ENCODE measurements at regions of chr14 and their contacts with region 1.

Region 1: DNA sequence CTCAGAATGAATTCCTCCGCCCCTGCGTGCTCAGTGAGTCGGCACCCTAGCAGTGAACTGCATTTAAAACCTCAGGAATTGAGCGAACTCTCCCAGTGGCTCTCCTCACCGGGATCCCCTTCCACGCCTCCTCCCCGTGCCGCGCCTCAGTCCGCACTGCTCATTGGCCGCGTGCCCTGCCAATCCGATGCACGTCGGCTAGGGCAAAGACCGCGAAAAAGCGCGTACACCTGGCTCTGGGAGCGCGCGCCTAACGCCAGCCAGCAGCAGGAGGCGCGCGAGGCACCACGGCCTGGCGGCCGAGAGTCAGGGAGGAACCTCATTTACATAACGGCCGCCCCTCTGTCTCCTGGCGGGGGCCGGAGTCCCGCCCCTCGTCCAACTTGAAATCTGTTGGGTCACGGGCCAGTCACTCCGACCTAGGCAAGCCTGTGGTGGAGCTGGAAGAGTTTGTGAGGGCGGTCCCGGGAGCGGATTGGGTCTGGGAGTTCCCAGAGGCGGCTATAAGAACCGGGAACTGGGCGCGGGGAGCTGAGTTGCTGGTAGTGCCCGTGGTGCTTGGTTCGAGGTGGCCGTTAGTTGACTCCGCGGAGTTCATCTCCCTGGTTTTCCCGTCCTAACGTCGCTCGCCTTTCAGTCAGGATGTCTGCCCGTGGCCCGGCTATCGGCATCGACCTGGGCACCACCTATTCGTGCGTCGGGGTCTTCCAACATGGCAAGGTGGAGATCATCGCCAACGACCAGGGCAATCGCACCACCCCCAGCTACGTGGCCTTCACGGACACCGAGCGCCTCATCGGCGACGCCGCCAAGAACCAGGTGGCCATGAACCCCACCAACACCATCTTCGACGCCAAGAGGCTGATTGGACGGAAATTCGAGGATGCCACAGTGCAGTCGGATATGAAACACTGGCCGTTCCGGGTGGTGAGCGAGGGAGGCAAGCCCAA is at the start of gene HSPA2:
- DNase-seq: peak; percentile 88
- ATAC-seq: peak; percentile 99
- H3K4me3 ChIP-seq: peak within 1 kb of the TSS; percentile 70 to 73 (median 72)
- H3K27ac ChIP-seq: peak within 1 kb of the TSS; percentile 59
- H3K4me1 ChIP-seq: peaks cover 18% of the 10 kb centered on the region
- H3K27me3 ChIP-seq: no peaks in the 10 kb centered on the region
- CTCF ChIP-seq: peak; percentile 96
- EP300 ChIP-seq: no peak
- POLR2A ChIP-seq: peak; percentile 47 to 53; a peak in 3 of 4 replicates
- RAD21 ChIP-seq: peak; percentile 79
- total RNA-seq, gene HSPA2: 0.27 and 0.28 TPM in 2 replicates

Region 2: GRCh38 chr14:64636208-64636979 is 95.9 kb after region 1 on chr14:
- CTCF ChIA-PET with region 1: interaction called, 5 read pairs
- POLR2A ChIA-PET with region 1: no interaction called
- in situ Hi-C with region 1: loop called (anchors 5 kb)
- intact Hi-C with region 1: loop called (anchors 1 kb)
- DNase-seq: peak; percentile 27
- ATAC-seq: peak; percentile 84
- H3K4me3 ChIP-seq: no peak overlapping the region; a peak in 1 of 6 replicates
- H3K27ac ChIP-seq: no peak overlapping the region
- H3K4me1 ChIP-seq: peaks cover 28% of the 10 kb centered on the region
- H3K27me3 ChIP-seq: no peaks in the 10 kb centered on the region
- CTCF ChIP-seq: peak; percentile 84
- EP300 ChIP-seq: no peak
- POLR2A ChIP-seq: no peak
- RAD21 ChIP-seq: peak; percentile 65

Region 3: DNA sequence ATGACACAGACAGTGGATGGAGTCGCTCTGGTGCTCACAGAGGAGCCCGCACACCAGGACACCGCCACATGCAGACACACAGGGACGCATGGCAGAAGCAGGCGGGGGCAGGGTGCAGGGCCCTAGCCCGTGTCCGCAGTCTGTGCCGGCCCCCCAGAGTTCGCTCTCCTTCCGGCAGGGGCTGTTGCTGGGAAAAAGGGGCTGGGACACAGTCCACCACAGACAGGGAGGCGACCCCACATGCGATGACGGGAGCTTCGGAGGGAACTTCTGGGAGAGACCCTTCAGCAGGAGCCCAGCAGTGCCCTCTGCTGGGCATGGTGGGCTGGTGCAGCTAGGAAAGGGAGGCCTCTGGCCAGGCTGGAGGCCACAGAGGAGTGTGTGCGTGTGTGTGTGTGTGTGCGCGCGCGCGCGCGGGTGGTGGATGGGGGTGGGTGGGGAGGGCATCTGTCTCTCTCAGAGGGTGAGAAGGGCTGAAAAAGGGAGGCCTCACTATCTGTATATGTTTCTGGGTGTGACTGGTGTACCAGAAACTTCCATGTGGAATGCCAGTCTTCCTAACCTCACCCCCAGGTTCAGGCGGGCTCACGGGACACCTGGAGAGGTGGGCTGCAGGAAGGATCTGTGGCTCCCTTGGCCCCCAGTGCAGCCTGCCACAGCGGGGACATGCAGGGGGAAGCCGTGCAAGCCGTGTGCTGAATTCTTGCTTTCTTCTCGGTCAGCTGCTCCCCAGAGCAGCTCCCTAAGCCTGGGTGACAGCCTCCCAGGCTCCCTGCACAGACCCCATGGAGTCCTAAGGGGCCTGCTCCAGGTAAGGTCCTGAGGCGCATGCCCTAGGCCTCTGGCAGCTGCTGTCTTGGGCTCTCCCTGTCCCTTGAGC is 224.4 kb after region 1 on chr14:
- CTCF ChIA-PET with region 1: no interaction called
- POLR2A ChIA-PET with region 1: no interaction called
- in situ Hi-C with region 1: no loop called
- intact Hi-C with region 1: loop called (anchors 1 kb)
- DNase-seq: peak; percentile 53
- ATAC-seq: peak; percentile 81
- H3K4me3 ChIP-seq: peak overlapping the region in 1 of 3 experiments; percentile 50; a peak in 2 of 6 replicates
- H3K27ac ChIP-seq: no peak overlapping the region
- H3K4me1 ChIP-seq: peaks cover 20% of the 10 kb centered on the region
- H3K27me3 ChIP-seq: peaks cover 4 to 42% of the 10 kb centered on the region in 2 experiments; a peak in 4 of 5 replicates
- CTCF ChIP-seq: peak; percentile 92
- EP300 ChIP-seq: no peak
- POLR2A ChIP-seq: no peak
- RAD21 ChIP-seq: peak; percentile 81